ENCODE measurements at regions of chr10 and their contacts with region 1.

Region 1: DNA sequence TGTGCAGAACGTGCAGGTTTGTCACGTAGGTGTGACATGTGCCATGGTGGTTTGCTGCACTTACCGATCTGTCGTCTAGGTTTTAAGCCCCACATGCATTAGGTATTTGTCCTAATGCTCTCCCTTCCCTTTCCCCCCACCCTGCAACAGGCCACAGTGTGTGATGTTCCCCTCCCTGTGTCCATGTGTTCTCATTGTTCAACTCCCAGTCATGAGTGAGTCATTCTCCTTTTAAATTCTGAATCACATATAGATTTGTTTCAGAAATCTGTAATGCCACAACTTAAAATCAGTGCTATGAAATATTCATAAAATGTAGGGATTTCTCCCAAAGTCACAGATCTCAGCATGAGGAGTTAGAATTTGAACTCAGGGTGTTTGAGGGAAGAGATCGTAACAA is 552.5 kb upstream of the MBL2 start:
- DNase-seq: no peak
- H3K4me3 ChIP-seq: no peak overlapping the region
- H3K27ac ChIP-seq: no peak overlapping the region
- H3K4me1 ChIP-seq: no peaks in the 10 kb centered on the region
- H3K27me3 ChIP-seq: no peaks in the 10 kb centered on the region
- CTCF ChIP-seq: no peak

Region 2: GRCh38 chr10:53284615-53285177 is 40.4 kb before region 1 on chr10:
- CTCF ChIA-PET with region 1: no interaction called
- POLR2A ChIA-PET with region 1: no interaction called
- intact Hi-C with region 1: no loop called
- DNase-seq: peak in 1 of 2 experiments; percentile 50
- H3K4me3 ChIP-seq: no peak overlapping the region
- H3K27ac ChIP-seq: no peak overlapping the region
- H3K4me1 ChIP-seq: no peaks in the 10 kb centered on the region
- H3K27me3 ChIP-seq: no peaks in the 10 kb centered on the region
- CTCF ChIP-seq: no peak

Region 3: DNA sequence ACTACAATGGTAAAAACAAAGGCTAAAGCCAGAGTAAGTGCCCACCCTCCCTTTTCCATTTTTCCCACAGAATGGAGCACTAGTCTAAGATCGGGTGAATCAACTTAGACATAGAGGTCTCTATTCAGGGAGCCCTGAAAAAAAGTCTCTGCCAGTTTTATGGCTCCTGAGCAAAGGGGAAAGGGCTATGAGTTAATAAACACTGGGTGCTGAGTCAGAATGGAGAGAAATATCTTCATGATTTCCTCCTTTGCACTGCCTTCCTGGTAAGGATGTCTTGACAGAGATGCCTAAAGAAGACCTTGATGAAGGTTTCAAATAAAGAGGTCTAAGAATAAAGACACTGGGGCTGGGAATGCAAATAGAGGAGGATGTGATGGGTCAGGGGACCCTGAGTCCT is 54.9 kb after region 1 on chr10:
- CTCF ChIA-PET with region 1: no interaction called
- POLR2A ChIA-PET with region 1: no interaction called
- intact Hi-C with region 1: loop called (anchors 10 kb)
- DNase-seq: no peak
- H3K4me3 ChIP-seq: no peak overlapping the region
- H3K27ac ChIP-seq: no peak overlapping the region
- H3K4me1 ChIP-seq: no peaks in the 10 kb centered on the region
- H3K27me3 ChIP-seq: no peaks in the 10 kb centered on the region
- CTCF ChIP-seq: no peak

Region 4: DNA sequence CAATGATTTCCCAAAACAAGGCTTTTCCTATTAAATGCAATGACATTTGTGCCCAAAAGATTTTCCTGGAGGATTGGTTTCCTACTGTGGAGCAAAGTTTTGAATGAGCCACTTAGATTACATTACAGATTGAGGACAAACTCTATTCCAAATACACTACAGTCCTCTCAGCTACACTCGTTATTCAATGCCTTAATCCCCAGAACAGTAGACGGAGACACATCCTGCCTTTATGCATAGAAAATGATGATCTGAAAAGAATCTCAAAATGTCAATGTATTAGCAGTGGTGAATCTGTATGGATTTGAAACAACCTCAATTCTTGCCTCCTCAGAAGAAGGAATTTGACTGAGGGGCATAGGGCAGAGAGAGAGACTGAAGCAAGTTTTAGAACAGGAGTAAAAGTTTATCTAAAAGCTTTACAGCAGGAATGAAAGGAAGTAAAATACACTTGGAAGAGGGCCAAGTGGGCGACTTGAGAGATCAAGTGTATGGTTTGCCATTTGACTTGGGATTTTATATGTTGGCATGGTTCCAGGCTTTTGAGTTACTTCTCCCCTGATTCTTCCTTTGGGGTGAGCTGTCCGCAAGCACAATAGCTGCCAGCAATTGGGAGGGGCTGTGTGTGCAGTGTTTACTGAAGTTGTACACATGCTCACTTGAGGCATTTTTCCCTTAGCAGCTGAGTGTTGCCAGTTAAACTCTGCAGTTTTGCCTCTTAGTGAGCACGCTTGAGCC is 339.4 kb after region 1 on chr10:
- CTCF ChIA-PET with region 1: interaction called, 12 read pairs
- POLR2A ChIA-PET with region 1: no interaction called
- intact Hi-C with region 1: no loop called
- DNase-seq: peak in 1 of 2 experiments; percentile 37
- H3K4me3 ChIP-seq: no peak overlapping the region
- H3K27ac ChIP-seq: no peak overlapping the region
- H3K4me1 ChIP-seq: no peaks in the 10 kb centered on the region
- H3K27me3 ChIP-seq: no peaks in the 10 kb centered on the region
- CTCF ChIP-seq: no peak